Astrocyte of the cerebellum (primary cell): ENCODE measurements at regions of chr4 and their contacts with region 1.

Region 1: GRCh38 chr4:11004818-11005217 is 320.2 kb upstream of the CLNK start:
- DNase-seq: no peak
- H3K4me3 ChIP-seq: no peak overlapping the region
- CTCF ChIP-seq: no peak

Region 2: GRCh38 chr4:10965196-10965595 is 39.6 kb before region 1 on chr4:
- in situ Hi-C with region 1: loop called (anchors 5 kb)
- DNase-seq: peak; percentile 5
- H3K4me3 ChIP-seq: no peak overlapping the region
- CTCF ChIP-seq: no peak

Region 3: DNA sequence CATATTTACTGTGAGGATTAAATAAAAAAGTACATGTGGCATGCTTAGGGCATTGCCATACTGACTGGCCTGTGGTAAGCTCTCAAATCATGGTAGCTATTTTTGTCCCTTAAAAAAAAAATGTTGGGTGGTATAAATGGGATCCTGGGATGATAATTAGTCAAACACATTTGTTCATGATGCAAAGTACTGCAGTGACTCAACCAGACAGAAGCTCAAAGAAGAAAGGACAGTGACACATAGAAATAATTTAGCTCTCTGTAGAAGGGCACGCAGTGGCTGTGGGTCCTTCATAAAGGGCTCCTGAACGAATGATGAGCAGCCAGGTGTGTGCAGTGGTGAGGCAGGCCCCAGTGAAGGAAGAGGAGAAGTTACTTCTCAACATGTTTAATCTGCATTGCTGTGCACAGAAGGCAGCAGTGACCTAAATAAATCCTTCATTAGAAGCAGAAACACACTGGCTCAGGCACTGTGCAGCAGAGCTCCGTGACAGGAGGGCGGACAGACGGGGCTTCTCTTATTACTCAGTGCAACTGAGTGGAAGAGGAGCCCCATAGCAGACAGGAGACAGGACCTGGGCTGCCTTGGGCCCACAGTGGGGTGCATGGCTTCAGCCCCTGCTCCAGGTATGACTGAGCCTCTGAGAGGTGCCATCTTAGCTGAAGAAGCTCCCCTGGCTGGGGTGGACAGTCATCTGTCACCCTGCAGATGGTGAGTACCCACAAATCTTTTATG is 403.6 kb after region 1 on chr4:
- in situ Hi-C with region 1: no loop called
- DNase-seq: no peak
- H3K4me3 ChIP-seq: no peak overlapping the region
- CTCF ChIP-seq: no peak